CD4-positive, alpha-beta T cell (primary cell): ENCODE measurements at regions of chr6 and their contacts with region 1.

Region 1: GRCh38 chr6:33788694-33789549 is at the start of gene LEMD2:
- DNase-seq: peak; percentile 81 to 96 (median 92)
- ATAC-seq: peak; percentile 88
- H3K4me3 ChIP-seq: peak within 1 kb of the TSS; percentile 53
- H3K4me3 Mint-ChIP-seq: peak within 1 kb of the TSS; percentile 94
- H3K27ac ChIP-seq: peak within 1 kb of the TSS; percentile 50 to 87
- H3K27ac Mint-ChIP-seq: peak within 1 kb of the TSS; percentile 94
- H3K4me1 ChIP-seq: peaks cover 45% of the 10 kb centered on the region
- H3K4me1 Mint-ChIP-seq: peaks cover 47% of the 10 kb centered on the region
- H3K27me3 ChIP-seq: no peaks in the 10 kb centered on the region
- H3K27me3 Mint-ChIP-seq: no peaks in the 10 kb centered on the region
- CTCF ChIP-seq: no peak
- total RNA-seq, gene LEMD2: 122 to 124 TPM

Region 2: DNA sequence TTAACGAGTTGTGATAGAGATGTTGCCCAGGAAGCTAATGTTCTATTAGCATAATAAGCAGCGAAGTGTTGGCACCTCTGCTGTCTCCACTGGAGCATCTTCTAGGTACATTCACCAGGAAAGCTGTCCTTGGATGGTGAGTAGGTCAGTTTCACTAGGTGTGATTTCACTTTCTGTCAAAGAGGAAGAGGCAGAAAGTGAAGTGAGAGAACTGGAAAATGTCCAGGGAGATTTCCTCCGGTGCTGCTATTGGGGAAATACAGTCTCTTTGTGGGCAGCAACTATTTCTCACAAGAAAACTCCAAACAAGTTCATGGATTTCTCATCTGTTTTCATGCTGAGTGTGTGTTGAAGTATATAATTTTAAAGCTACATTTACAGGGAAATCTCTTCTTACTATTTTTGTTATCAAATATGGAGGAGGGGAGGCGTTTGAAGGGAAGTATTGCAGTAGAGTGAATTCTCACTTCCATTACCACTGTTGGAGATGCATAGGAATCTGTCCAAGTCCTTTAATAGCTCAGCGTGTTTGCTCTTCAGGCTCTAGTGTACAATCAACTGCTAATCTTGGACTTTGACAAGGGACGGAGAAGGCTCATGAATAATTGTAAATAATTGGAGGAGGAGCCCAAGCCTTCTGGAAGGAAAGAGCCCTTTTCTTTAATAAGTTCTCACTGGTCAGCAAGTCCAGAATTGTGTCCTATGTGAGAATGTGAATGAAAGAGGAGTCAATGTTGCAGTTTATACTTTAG is 1401.2 kb before region 1 on chr6:
- CTCF ChIA-PET with region 1: no interaction called
- POLR2A ChIA-PET with region 1: no interaction called
- intact Hi-C with region 1: no loop called
- DNase-seq: no peak
- ATAC-seq: no peak
- H3K4me3 ChIP-seq: no peak overlapping the region
- H3K4me3 Mint-ChIP-seq: no peak overlapping the region
- H3K27ac ChIP-seq: no peak overlapping the region
- H3K27ac Mint-ChIP-seq: no peak overlapping the region
- H3K4me1 ChIP-seq: no peaks in the 10 kb centered on the region
- H3K4me1 Mint-ChIP-seq: no peaks in the 10 kb centered on the region
- H3K27me3 ChIP-seq: no peaks in the 10 kb centered on the region
- H3K27me3 Mint-ChIP-seq: peaks cover 34% of the 10 kb centered on the region
- CTCF ChIP-seq: no peak

Region 3: DNA sequence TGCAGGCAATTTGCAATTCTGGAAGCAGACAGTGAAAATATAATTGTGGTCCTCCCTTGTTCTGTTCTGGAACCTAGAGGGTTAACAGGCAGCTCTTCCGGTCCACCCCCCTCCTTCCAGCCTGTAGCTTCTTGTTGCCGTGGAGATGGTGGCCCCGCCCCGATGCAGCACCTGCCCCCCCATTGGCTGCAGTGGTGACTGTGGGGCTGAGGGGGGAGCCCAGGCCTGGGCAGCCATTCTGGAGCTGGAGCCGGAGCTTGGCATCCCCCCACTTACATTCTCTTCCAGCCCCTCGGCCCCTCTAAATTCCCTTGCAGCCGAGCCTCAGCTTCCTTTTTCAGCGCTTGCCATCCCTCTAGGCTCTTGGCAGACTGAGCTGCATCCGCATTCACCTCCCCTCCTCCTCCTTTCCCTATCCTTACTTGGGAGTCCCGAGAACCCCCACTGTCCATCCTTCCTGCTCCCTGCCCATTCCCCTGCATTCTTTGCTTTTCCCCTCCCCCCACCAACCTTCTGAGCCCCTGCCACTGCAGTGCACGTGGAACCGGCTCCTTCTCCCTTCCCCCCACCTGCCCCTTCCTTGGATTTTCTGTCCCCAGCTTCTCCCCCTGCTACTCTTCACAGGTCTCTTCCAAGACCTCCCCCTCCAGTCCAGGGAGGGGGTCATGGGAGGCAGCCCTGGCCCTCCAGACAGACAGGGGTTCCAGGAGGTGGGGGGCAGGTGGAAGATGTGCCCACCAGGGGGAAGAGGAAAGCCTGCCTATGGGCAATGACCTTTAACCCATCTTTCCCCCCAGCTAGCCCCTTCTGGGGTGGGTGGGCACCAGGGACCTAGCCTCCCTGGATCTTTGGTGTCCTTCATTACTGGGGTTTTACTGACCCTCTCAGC is 357.7 kb before region 1 on chr6:
- CTCF ChIA-PET with region 1: no interaction called
- POLR2A ChIA-PET with region 1: interaction called, 3 read pairs
- intact Hi-C with region 1: loop called in 1 of 2 experiments (anchors 10 kb)
- DNase-seq: peak; percentile 74 to 92 (median 85)
- ATAC-seq: peak; percentile 66
- H3K4me3 ChIP-seq: peak overlapping the region; percentile 71
- H3K4me3 Mint-ChIP-seq: peak overlapping the region; percentile 93
- H3K27ac ChIP-seq: peak overlapping the region; percentile 52 to 64
- H3K27ac Mint-ChIP-seq: peak overlapping the region; percentile 92
- H3K4me1 ChIP-seq: peaks cover 63% of the 10 kb centered on the region
- H3K4me1 Mint-ChIP-seq: peaks cover 65% of the 10 kb centered on the region
- H3K27me3 ChIP-seq: no peaks in the 10 kb centered on the region
- H3K27me3 Mint-ChIP-seq: no peaks in the 10 kb centered on the region
- CTCF ChIP-seq: no peak

Region 4: DNA sequence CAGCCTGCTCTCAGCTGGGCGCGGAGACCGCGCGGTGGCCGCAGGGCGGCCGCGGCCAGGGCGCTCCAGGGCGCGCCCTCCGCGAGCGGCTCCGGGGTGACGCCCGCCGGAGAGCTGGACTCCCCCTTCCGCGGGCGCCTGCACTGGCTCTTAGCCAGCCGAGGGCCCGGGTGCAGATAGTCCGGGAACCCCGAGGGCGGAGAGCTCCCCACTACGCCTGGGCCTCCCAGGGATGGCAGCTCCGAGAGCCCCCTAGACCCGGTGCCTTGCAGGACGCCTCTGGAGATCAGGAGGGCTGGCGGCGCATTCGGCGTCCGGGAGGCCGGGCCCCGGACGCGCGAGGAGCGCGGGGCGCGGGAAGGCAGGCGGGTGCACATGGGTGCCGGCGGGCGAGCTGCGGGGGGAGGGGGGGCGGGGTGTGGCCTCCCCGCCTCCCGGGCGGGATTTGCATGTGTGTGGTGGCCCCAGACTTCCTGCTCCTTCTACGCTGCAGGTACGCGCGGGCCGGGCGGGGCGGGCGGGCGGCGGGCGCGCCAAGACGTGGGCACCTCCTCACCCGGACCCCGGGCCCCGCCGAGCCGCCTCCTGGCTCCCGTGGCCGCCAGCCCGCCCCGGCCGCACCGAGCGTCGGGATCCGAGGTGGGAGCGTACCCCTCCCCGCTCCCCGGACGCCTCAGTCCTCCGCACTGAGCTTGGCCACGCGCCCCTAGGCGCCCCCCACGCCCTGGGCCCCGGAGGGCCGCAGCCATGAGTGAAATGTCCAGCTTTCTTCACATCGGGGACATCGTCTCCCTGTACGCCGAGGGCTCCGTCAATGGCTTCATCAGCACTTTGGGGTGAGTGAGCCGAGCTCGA is 167.8 kb before region 1 on chr6 and contains the start of gene ITPR3:
- CTCF ChIA-PET with region 1: no interaction called
- POLR2A ChIA-PET with region 1: interaction called, 10 read pairs
- intact Hi-C with region 1: no loop called
- DNase-seq: peak; percentile 61 to 93 (median 74)
- ATAC-seq: peak; percentile 88
- H3K4me3 ChIP-seq: peak within 1 kb of the TSS; percentile 99
- H3K4me3 Mint-ChIP-seq: peak within 1 kb of the TSS; percentile 95
- H3K27ac ChIP-seq: peak within 1 kb of the TSS; percentile 76 to 82
- H3K27ac Mint-ChIP-seq: peak within 1 kb of the TSS; percentile 93
- H3K4me1 ChIP-seq: peaks cover 60% of the 10 kb centered on the region
- H3K4me1 Mint-ChIP-seq: peaks cover 42% of the 10 kb centered on the region
- H3K27me3 ChIP-seq: no peaks in the 10 kb centered on the region
- H3K27me3 Mint-ChIP-seq: no peaks in the 10 kb centered on the region
- CTCF ChIP-seq: no peak
- total RNA-seq, gene ITPR3: 44.5 to 45.5 TPM

Region 5: GRCh38 chr6:33809594-33809993 is 20.7 kb after region 1 on chr6:
- CTCF ChIA-PET with region 1: no interaction called
- POLR2A ChIA-PET with region 1: no interaction called
- intact Hi-C with region 1: no loop called
- DNase-seq: no peak
- ATAC-seq: no peak
- H3K4me3 ChIP-seq: no peak overlapping the region
- H3K4me3 Mint-ChIP-seq: no peak overlapping the region
- H3K27ac ChIP-seq: no peak overlapping the region
- H3K27ac Mint-ChIP-seq: no peak overlapping the region
- H3K4me1 ChIP-seq: peaks cover 15% of the 10 kb centered on the region
- H3K4me1 Mint-ChIP-seq: peaks cover 29% of the 10 kb centered on the region
- H3K27me3 ChIP-seq: peaks cover 36 to 41% of the 10 kb centered on the region in 2 experiments
- H3K27me3 Mint-ChIP-seq: peaks cover 62% of the 10 kb centered on the region
- CTCF ChIP-seq: no peak

Region 6: DNA sequence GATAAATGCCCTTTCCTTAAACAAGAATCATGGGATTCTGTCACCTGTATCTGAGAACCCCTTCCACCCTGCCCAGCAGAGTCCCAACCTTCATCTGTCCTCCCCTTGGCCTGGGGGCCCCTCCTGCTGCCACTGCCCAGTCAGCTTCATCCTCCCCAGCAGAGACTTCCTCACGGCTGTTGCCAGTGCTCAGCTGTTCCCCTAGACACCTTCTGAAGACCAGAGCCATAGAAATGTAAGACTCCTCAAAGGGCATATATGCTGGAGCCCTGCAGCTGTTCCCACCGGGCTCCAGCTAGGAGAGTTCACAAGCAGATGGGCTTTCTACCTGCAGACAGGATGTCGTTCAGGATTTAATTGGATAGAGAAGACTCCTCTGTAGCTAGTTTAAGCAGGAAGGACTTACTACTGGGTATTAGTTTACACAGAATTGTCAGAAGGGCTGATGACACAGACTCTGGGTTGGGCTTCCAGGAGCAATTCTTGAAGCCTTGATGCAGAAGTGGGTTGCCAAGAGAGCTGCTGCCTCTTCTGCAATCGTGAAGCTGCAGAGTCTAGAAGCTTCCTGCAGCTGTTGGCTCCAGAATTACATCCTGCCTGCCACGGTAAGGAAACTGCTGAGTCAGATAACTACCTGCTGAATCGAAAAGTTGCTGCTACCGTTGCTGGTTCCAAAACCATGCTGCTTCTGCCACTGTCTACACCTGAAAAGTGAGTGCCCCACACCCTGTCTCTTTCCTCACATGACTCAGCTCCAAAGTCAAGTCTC is 72.0 kb after region 1 on chr6:
- CTCF ChIA-PET with region 1: no interaction called
- POLR2A ChIA-PET with region 1: interaction called, 10 read pairs
- intact Hi-C with region 1: no loop called
- DNase-seq: peak in 11 of 14 experiments; percentile 5 to 63 (median 34)
- ATAC-seq: peak; percentile 57
- H3K4me3 ChIP-seq: no peak overlapping the region
- H3K4me3 Mint-ChIP-seq: peak overlapping the region; percentile 39
- H3K27ac ChIP-seq: no peak overlapping the region
- H3K27ac Mint-ChIP-seq: peak overlapping the region; percentile 10
- H3K4me1 ChIP-seq: peaks cover 73% of the 10 kb centered on the region
- H3K4me1 Mint-ChIP-seq: peaks cover 71% of the 10 kb centered on the region
- H3K27me3 ChIP-seq: peaks cover 0 to 10% of the 10 kb centered on the region in 2 experiments
- H3K27me3 Mint-ChIP-seq: no peaks in the 10 kb centered on the region
- CTCF ChIP-seq: no peak

Region 7: GRCh38 chr6:34425498-34426410 is 636.8 kb after region 1 on chr6 and contains the start of gene RPS10:
- CTCF ChIA-PET with region 1: no interaction called
- POLR2A ChIA-PET with region 1: no interaction called
- intact Hi-C with region 1: loop called in 1 of 2 experiments (anchors 5 kb)
- DNase-seq: peak; percentile 81 to 96 (median 88)
- ATAC-seq: peak; percentile 97
- H3K4me3 ChIP-seq: peak within 1 kb of the TSS; percentile 75
- H3K4me3 Mint-ChIP-seq: peak within 1 kb of the TSS; percentile 99
- H3K27ac ChIP-seq: peak within 1 kb of the TSS; percentile 73 to 74
- H3K27ac Mint-ChIP-seq: peak within 1 kb of the TSS; percentile 97
- H3K4me1 ChIP-seq: peaks cover 37% of the 10 kb centered on the region
- H3K4me1 Mint-ChIP-seq: peaks cover 39% of the 10 kb centered on the region
- H3K27me3 ChIP-seq: no peaks in the 10 kb centered on the region
- H3K27me3 Mint-ChIP-seq: no peaks in the 10 kb centered on the region
- CTCF ChIP-seq: no peak
- total RNA-seq, gene RPS10: 3,088 to 3,122 TPM